ENCODE measurements at regions of chr14 and their contacts with region 1.

Region 1: DNA sequence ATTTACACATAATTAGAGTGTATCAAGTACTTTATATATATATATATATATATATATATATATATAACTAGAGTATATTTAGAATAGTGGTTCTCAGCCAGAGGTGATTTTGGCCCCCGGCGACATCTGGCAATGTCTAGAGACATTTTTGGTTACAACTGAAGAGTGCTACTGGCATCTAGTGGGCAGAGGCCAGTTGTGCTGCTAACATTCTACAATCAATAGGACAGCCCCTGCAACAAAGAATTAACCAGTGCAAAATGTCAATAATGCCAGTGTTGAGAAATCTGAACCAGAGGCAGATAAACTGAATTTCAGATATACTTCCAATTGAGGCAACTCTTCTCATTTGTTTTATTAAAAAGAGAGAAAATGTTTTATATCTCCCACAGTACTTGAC is 8.9 kb downstream of the GTF2A1 start:
- DNase-seq: no peak
- H3K4me3 Mint-ChIP-seq: no peak overlapping the region
- H3K27ac Mint-ChIP-seq: no peak overlapping the region
- H3K4me1 Mint-ChIP-seq: peaks cover 28% of the 10 kb centered on the region
- H3K27me3 Mint-ChIP-seq: no peaks in the 10 kb centered on the region

Region 2: DNA sequence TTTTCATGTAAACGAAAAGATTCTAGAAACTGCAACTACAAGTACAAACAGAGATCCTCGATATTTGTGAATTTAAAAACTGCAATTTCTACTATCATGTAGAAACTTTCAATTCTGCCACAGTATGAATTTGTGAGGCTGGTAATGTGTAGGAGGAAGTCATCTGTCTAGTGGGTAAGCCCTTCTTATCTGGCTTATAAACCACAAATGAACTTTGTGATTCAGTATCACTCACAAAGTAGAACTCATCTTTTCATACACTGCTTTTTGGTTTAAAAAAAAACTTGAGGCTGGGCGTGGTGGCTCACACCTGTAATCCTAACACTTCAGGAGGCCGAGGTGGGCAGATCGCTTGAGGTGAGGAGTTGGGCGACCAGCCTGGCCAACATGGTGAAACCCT is 11.8 kb before region 1 on chr14:
- intact Hi-C with region 1: loop called (anchors 1 kb)
- DNase-seq: no peak
- H3K4me3 Mint-ChIP-seq: no peak overlapping the region
- H3K27ac Mint-ChIP-seq: no peak overlapping the region
- H3K4me1 Mint-ChIP-seq: peaks cover 19% of the 10 kb centered on the region
- H3K27me3 Mint-ChIP-seq: no peaks in the 10 kb centered on the region

Measured in activated T-helper 1 cell treated with anti-CD3 and anti-CD28 coated beads, Interleukin-12 subunit alpha, Interleukin-12 subunit beta, Interleukin-2, Interleukin-4 antibody, amounts not matched to agents 30 ng/mL and 10 ng/mL and 1 ng/mL, durations not matched to agents 14 hours and 24 hours and 36 hours (primary cell).